ENCODE measurements at regions of chr11 and their contacts with region 1.

Region 1: DNA sequence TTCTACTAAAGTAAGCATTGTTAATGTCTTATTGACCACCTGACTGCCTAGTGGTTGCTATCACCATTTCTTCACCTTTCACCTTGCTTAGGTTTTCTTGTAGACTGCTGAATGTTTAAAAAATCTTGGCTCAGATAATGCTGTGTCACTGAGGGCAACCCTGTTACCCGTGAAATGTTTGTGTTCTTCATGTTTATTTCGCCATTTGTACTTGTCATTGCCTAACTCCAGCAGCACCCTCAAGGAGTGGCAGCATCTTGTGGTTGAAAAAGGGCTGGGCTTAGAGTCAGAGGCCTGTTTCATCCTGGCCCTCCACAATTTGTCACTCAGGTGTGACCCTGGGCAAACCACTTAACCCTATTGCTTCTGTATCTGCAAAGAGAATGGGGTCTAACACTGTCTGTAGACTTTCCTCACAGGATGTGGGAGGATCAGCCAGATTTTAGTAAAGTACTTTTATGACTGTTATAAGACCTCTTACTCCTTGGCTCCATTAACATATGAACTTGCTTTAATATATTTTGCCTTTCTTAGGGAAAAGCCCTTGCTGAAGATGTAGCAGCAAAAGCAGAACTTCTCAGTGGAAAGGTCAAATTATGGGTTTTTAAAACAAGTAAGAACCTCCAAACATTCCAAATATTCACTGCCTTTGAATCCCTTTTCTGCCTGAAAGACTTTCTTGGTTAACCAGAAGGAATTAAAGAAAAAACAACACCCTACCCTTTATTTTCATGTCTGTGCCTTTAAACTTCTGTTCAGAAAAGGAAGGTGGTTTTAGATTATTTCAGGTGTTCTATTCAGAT is 154.5 kb upstream of the C11orf87 start:
- DNase-seq: no peak

Region 2: GRCh38 chr11:109155291-109155690 is 112.2 kb before region 1 on chr11:
- intact Hi-C with region 1: no loop called
- DNase-seq: no peak

Region 3: GRCh38 chr11:109371444-109372176 is 104.1 kb after region 1 on chr11:
- intact Hi-C with region 1: no loop called
- DNase-seq: no peak

Region 4: DNA sequence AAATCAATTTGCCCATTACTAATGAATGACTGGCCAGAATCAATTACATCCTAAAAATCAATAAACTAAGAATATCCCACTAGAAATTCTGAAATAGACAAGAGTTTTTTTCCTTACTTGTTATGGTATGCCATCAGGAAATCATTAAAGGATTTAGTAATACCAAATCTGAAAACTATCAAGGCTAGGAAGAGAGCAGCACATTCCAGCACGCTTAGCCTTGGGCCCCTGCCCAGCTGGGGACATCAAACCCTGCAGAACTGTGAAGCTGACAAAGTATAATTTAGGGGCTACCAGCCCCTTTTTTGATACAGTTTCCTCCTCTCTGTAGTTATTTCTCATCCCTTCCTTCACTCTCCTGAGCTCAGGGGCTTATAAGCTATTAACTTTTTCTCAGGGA is 577.9 kb after region 1 on chr11:
- intact Hi-C with region 1: loop called (anchors 10 kb)
- DNase-seq: no peak